SK-N-SH (cell line): ENCODE measurements at regions of chr2 and their contacts with region 1.

Region 1: DNA sequence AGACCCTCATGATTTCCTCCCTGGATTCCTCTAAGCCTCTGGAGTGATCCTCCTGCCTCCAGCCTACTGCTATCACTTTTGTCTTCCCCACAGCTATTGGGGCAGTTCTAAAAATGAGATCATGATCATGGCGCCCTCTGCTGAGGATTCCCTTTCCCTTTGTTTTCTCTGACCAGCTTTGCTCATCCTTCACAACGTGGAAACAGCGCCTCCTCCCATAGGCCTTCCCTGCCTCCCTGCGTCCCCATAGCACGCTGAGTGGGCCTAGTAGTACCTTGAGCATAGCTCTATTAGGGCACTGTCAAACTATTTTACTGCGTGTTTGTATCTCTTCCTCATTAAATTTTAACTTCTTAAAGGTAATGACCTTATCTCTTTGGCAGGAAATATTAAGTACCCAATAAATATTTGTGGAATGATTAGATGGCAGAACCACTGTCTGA is 207.0 kb upstream of the FANCL start:
- DNase-seq: peak; percentile 45
- H3K4me3 ChIP-seq: no peak overlapping the region; a peak in 1 of 4 replicates
- H3K27ac ChIP-seq: no peak overlapping the region
- H3K4me1 ChIP-seq: no peaks in the 10 kb centered on the region; a peak in 1 of 4 replicates
- H3K27me3 ChIP-seq: no peaks in the 10 kb centered on the region
- CTCF ChIP-seq: peak; percentile 63
- EP300 ChIP-seq: no peak
- RAD21 ChIP-seq: peak; percentile 75

Region 2: GRCh38 chr2:57759822-57760300 is 688.2 kb before region 1 on chr2:
- CTCF ChIA-PET with region 1: interaction called, 11 read pairs
- POLR2A ChIA-PET with region 1: no interaction called
- DNase-seq: peak; percentile 76
- H3K4me3 ChIP-seq: peak overlapping the region; percentile 26 to 38; a peak in 2 of 4 replicates
- H3K27ac ChIP-seq: no peak overlapping the region
- H3K4me1 ChIP-seq: peaks cover 0 to 2% of the 10 kb centered on the region in 2 experiments; a peak in 1 of 4 replicates
- H3K27me3 ChIP-seq: no peaks in the 10 kb centered on the region
- CTCF ChIP-seq: peak; percentile 92
- EP300 ChIP-seq: no peak
- RAD21 ChIP-seq: peak; percentile 93

Region 3: GRCh38 chr2:57906152-57906732 is 541.8 kb before region 1 on chr2:
- CTCF ChIA-PET with region 1: interaction called, 15 read pairs
- POLR2A ChIA-PET with region 1: no interaction called
- DNase-seq: peak; percentile 49
- H3K4me3 ChIP-seq: no peak overlapping the region; a peak in 1 of 4 replicates
- H3K27ac ChIP-seq: no peak overlapping the region
- H3K4me1 ChIP-seq: no peaks in the 10 kb centered on the region
- H3K27me3 ChIP-seq: no peaks in the 10 kb centered on the region
- CTCF ChIP-seq: peak; percentile 86
- EP300 ChIP-seq: no peak
- RAD21 ChIP-seq: peak; percentile 95

Region 4: GRCh38 chr2:58131191-58132011 is 316.7 kb before region 1 on chr2:
- CTCF ChIA-PET with region 1: interaction called, 30 read pairs
- POLR2A ChIA-PET with region 1: no interaction called
- DNase-seq: peak; percentile 65
- H3K4me3 ChIP-seq: no peak overlapping the region
- H3K27ac ChIP-seq: peak overlapping the region; percentile 57 to 75; a peak in 3 of 4 replicates
- H3K4me1 ChIP-seq: peaks cover 0 to 11% of the 10 kb centered on the region in 2 experiments; a peak in 2 of 4 replicates
- H3K27me3 ChIP-seq: no peaks in the 10 kb centered on the region
- CTCF ChIP-seq: peak; percentile 72
- EP300 ChIP-seq: peak; percentile 70 to 78; a peak in 3 of 4 replicates
- RAD21 ChIP-seq: peak; percentile 88

Region 5: DNA sequence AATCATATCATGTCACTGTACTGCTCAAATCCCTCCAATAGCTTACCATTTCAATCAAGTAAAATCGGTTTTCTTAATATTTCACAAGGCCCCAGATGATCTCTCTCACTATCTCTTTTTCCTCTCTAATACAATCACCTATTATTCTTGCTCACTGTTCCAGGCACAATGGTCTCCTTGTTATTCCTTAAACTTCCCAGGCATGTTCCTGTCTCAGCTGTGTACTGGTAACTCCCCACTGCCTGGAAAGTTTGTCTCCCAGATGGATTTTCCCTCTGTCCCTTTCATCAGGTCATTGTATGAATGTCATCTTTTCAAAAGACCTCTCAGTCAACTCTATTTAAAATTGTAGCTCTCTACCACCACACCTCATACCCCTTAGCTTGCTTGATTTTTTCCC is 176.3 kb before region 1 on chr2:
- CTCF ChIA-PET with region 1: no interaction called
- POLR2A ChIA-PET with region 1: no interaction called
- DNase-seq: no peak
- H3K4me3 ChIP-seq: no peak overlapping the region
- H3K27ac ChIP-seq: no peak overlapping the region
- H3K4me1 ChIP-seq: no peaks in the 10 kb centered on the region
- H3K27me3 ChIP-seq: no peaks in the 10 kb centered on the region
- CTCF ChIP-seq: no peak
- EP300 ChIP-seq: no peak
- RAD21 ChIP-seq: no peak

Region 6: DNA sequence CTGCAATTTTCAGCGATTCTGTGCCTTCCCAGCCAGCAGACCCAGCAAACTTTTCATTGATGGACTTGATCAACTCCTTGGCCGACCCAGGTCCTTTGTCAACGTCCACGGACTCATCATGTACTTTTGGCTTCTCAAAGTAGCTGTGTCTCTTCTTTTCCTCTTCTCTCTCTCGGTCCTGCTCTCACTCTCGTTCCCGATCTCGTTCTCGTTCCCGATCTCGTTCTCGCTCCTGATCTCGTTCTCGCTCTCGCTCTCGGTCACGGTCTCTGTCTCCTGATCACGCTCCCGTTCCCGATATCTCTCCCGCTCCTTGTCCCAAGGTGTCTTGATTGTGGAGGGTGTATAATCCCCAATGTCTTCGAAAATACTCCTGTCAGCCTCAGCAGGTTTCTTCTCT is 12.6 kb after region 1 on chr2:
- CTCF ChIA-PET with region 1: interaction called, 34 read pairs
- POLR2A ChIA-PET with region 1: no interaction called
- DNase-seq: no peak
- H3K4me3 ChIP-seq: no peak overlapping the region
- H3K27ac ChIP-seq: no peak overlapping the region
- H3K4me1 ChIP-seq: no peaks in the 10 kb centered on the region
- H3K27me3 ChIP-seq: no peaks in the 10 kb centered on the region
- CTCF ChIP-seq: no peak
- EP300 ChIP-seq: no peak
- RAD21 ChIP-seq: no peak

Region 7: DNA sequence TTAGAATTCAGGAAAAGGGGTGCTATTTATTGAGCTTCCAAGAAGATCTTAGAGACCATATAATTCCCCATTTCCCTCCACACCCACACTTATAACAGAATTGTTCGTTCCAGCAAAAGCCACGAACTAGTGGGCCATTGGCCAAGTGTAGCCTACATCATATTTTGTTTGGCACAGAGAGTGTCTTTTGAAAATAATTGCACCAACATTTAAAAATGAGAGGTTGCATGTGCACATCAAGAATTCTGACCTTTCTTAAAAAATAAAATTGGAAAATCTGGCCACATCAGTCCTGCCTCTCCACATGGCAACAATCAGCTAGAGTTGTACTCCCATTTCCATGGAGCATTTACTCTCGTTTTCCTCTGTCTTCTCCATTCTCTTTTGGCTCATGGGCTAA is 448.6 kb after region 1 on chr2:
- CTCF ChIA-PET with region 1: no interaction called
- POLR2A ChIA-PET with region 1: no interaction called
- DNase-seq: no peak
- H3K4me3 ChIP-seq: no peak overlapping the region
- H3K27ac ChIP-seq: no peak overlapping the region
- H3K4me1 ChIP-seq: no peaks in the 10 kb centered on the region
- H3K27me3 ChIP-seq: no peaks in the 10 kb centered on the region; the same call in 1 of the 2 replicates
- CTCF ChIP-seq: no peak
- EP300 ChIP-seq: no peak
- RAD21 ChIP-seq: no peak